Calu3 (cell line): ENCODE measurements at regions of chr13 and their contacts with region 1.

Region 1: DNA sequence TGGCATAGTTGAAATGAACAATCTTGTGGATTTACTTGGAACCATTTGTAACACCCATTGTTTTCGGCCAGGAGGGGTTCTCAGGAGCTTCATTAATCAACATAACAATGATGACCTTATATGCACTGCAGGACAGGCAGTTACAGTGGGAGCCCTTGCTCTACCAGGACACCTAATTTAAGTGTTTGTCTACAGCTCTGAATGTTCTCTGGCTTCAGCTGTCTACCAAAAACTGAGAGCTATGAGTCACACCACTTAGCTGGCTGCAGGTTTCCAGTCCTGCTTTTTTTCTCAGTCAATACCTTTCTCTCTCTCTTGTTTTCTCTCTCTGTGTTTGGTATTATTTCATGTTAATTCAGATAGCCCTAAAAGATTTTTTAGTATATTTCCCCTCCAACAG is 105.4 kb upstream of the MBNL2 start:
- DNase-seq: no peak
- H3K4me3 Mint-ChIP-seq: no peak overlapping the region
- H3K27ac Mint-ChIP-seq: no peak overlapping the region
- H3K4me1 Mint-ChIP-seq: peaks cover 43% of the 10 kb centered on the region
- H3K27me3 Mint-ChIP-seq: no peaks in the 10 kb centered on the region
- CTCF ChIP-seq: no peak

Region 2: DNA sequence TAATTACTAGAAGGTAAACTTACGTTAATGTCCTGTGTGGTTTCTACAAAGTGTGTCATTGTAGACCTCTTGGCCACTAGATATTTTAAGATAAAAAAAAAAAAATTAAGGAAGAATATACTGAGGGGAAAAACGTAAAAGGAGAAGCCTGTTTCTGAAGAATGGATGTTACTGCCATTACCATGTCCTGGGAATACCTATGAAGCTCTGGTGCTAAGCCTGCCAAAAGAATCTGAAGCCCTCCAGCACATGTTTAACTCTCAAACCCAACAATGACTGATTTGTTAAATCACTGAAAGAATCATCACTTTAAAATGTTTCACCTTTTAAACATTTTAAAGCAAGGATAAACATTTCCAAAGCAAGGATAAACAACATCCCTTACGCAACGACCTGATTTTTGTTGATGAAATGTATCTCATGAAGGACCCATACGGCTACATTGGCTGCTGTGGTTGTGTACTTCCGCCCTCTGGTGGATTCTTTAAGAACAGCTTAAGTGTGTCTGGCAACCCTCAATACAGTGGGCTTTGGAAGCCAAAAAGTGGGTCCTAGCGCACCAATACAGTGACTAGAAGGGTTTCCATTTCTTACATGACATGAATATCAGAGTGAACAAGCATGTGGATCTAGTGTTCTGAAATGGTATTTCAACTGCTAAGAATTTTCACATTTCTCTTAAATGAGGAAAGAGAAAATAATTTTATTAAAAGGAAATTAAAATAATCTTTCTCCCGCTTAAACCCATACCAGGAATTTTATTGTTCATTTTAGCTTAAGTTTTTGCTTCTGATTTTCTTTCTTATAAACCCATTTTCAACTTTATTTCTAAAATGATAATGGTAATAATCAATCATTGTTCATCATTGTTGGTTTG is 242.7 kb after region 1 on chr13:
- CTCF ChIA-PET with region 1: no interaction called
- intact Hi-C with region 1: loop called (anchors 5 kb)
- DNase-seq: peak; percentile 9
- H3K4me3 Mint-ChIP-seq: no peak overlapping the region
- H3K27ac Mint-ChIP-seq: no peak overlapping the region
- H3K4me1 Mint-ChIP-seq: no peaks in the 10 kb centered on the region
- H3K27me3 Mint-ChIP-seq: no peaks in the 10 kb centered on the region
- CTCF ChIP-seq: no peak